ENCODE measurements at regions of chr13 and their contacts with region 1.

Region 1: DNA sequence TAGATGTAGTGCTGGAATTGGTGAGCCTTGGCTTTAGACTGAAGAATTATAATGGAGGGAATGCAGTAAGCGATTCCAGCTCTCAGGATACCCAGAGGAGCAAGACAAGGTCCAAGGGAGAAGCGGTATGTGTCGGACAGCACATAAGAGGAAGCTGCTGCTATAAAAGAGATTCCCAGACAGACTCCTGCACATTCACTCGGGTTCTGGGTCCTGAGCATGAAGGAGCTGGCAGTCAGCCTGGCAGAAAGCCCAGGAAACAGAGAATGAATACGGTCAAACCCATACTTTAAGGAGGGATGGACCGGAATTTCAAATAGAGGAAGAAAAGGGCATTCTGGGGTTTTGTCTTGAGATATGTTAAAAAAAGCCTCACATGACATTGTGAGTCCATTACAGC is 308.3 kb downstream of the DNAJC15 start:
- DNase-seq: no peak
- ATAC-seq: no peak

Region 2: DNA sequence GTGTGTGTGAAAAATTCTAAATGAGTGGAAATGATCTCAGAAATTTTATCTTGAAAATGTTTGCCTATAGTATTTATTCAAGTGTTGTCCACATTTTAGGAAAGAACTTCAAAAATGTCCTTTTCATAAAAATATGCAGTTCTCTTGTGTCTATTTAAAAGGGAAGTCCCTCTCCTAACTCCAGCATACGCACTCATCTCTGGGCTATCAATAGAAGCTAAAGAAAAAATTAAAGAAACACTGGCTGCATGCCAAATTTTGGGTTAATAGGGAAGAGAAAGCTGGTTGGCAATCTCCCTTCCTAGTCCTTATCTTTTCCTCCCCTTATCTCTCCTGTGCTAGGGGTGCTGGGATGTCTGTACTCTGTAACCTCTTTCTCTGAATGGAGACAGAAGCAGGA is 141.8 kb after region 1 on chr13:
- intact Hi-C with region 1: loop called (anchors 5 kb)
- DNase-seq: no peak
- ATAC-seq: peak; percentile 42

Measured in Right ventricle myocardium inferior (tissue), 1 donor.